Activated CD4-positive, alpha-beta T cell treated with anti-CD3 and anti-CD28 coated beads, Interleukin-2, amount 10 ng/mL, durations not matched to agents 24 days and 14 days (primary cell): ENCODE measurements at regions of chr11 and their contacts with region 1.

Region 1: GRCh38 chr11:36354221-36355003 is 58.3 kb downstream of the PRR5L start:
- DNase-seq: peak; percentile 71
- H3K4me3 Mint-ChIP-seq: peak overlapping the region; percentile 48
- H3K27ac Mint-ChIP-seq: peak overlapping the region; percentile 81
- H3K4me1 Mint-ChIP-seq: peaks cover 66% of the 10 kb centered on the region
- H3K27me3 Mint-ChIP-seq: peaks cover 2% of the 10 kb centered on the region

Region 2: GRCh38 chr11:36289226-36289852 is 65.1 kb before region 1 on chr11 and contains the start of gene COMMD9:
- intact Hi-C with region 1: loop called (anchors 1 kb)
- DNase-seq: peak; percentile 98
- H3K4me3 Mint-ChIP-seq: peak within 1 kb of the TSS; percentile 91
- H3K27ac Mint-ChIP-seq: peak within 1 kb of the TSS; percentile 87
- H3K4me1 Mint-ChIP-seq: peaks cover 26% of the 10 kb centered on the region
- H3K27me3 Mint-ChIP-seq: no peaks in the 10 kb centered on the region
- total RNA-seq, gene COMMD9: 39.0 and 42.3 TPM in 2 replicates

Region 3: GRCh38 chr11:36376888-36377758 is 22.7 kb after region 1 on chr11:
- intact Hi-C with region 1: loop called (anchors 1 kb)
- DNase-seq: peak; percentile 89
- H3K4me3 Mint-ChIP-seq: peak overlapping the region; percentile 98
- H3K27ac Mint-ChIP-seq: peak overlapping the region; percentile 93
- H3K4me1 Mint-ChIP-seq: peaks cover 39% of the 10 kb centered on the region
- H3K27me3 Mint-ChIP-seq: peaks cover 42% of the 10 kb centered on the region

Region 4: DNA sequence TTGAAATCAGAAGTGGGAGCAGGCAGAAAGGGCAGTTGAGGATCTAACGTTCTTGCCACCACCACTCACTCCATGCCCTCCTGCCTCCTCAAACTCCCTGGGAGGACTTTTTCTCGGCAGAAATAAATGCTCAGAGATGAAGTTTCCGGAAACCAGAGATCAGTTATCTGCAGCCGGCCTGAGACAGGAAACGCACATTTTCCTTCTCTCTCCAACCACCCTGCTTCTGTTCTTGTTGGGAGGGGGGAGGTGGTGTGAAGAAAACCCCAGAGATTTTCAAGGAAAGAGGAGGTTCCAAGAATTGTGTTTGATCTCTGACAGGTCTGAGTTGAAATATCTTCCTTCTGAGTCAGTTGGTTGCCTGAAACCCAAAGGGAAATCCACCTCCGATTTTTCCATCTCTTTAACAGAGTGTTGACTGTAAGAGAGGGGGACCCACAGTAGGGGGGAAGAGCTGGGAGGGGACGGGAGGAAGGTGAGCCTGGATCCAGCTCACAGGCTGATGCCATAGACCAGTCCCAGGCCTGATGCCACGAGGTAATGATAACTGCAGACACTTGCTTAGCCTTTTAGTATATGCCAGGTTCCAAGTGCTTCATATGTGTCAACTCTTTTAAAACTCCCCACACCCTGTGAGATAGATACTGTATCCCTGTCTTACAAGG is 54.9 kb after region 1 on chr11:
- intact Hi-C with region 1: loop called (anchors 1 kb)
- DNase-seq: peak; percentile 82
- H3K4me3 Mint-ChIP-seq: peak overlapping the region; percentile 75
- H3K27ac Mint-ChIP-seq: peak overlapping the region; percentile 96
- H3K4me1 Mint-ChIP-seq: peaks cover 67% of the 10 kb centered on the region
- H3K27me3 Mint-ChIP-seq: no peaks in the 10 kb centered on the region

Region 5: DNA sequence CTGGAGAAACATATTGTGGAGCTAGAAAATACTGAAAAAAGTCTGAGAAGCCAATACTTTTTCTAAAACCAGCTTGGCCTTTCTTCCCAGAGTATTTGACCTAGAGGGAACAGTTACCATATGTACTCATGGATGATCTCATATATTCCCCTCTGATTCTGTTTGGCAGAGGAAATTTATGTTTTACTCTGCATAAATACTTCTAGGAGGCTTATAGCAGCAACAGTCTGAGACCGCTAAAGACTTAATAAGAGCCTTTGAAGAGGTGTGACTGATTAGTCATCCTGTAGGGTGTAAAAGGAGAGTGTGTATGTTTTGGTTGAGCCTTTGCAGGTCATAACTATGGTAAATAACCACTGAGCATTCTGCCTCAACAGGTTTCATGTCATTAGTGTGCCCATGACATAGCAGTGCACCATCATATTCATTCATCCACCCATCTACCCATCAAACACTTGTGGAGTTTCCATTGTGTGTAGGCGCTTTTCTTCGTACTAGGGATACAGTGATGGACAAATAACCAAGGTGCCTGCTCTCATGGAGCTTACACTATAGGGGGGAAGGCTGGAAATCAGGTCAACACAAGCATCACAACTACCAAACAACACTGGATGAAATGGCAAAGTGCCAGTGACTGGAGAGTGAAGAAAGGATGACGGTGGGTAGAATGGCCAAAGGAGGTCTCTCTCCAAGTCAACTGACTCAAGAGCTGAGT is 111.2 kb after region 1 on chr11:
- intact Hi-C with region 1: no loop called
- DNase-seq: no peak
- H3K4me3 Mint-ChIP-seq: no peak overlapping the region
- H3K27ac Mint-ChIP-seq: no peak overlapping the region
- H3K4me1 Mint-ChIP-seq: peaks cover 2% of the 10 kb centered on the region
- H3K27me3 Mint-ChIP-seq: no peaks in the 10 kb centered on the region

Region 6: DNA sequence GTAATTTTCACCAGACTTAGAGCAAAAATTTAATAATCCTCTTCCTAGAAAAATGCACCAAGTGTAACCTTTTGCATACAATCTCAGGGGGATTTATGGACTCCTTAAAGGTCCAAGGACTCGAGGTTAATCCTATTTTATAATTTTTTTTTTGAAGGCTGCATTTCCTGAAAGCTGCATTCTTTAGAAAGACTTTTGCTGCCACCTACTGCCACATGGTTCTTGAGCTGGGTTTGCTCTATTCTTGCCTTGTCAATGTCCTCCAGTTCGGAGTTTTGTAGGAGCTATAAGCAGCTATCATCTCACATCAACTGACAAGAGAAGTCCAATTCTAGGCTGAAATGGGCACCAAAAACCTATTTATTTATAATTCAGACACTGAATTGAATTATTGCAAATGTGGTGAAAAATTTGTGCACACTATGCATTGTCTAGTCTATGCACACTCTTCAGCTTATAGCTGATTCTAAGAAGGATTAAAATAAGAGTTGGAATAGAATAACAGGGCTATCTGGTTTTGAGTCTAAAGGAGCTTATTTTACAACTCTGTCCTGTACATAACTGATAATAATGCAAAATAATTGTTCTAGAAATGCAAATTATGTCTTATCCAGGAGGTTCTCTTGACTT is 124.4 kb after region 1 on chr11:
- intact Hi-C with region 1: loop called (anchors 1 kb)
- DNase-seq: peak; percentile 82
- H3K4me3 Mint-ChIP-seq: no peak overlapping the region
- H3K27ac Mint-ChIP-seq: no peak overlapping the region
- H3K4me1 Mint-ChIP-seq: peaks cover 10% of the 10 kb centered on the region
- H3K27me3 Mint-ChIP-seq: no peaks in the 10 kb centered on the region

Region 7: DNA sequence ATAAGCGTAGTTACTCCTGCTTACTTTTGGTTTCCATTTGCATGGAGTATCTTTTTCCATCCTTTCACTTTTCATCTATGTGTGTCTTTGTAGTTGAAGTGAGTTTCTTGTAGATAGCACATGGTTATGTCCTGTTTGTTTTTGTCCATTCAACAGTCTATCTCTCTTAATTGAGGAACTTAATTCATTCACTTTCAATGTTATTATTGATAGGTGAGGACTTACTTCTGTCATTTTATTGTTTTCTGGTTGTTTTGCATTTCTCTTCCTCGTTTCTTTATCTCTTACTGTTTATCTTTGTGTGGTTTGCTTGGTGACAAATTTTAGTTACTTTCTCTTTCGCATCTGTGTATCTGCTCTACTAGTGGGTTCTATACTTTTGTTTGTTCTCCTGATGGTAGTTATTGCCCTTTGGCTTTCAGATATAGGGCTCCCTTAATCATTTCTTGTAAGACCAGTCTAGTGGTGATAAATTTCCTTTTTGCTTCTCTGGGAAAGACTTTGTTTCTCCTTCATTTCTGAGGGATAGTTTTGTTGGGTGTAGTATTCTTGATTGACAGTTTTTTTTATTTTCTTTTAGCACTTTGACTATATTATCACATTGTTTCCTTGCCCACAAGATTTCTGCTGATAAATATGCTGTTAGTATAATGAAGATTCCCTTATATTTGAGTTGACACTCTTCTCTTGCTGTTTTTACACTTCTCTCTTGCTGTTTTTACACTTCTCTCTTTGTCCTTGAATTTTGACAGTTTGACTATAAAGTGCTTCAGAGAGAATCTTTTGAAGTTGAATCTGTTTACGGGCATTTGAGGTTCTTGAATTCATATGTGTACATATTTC is 204.4 kb after region 1 on chr11:
- intact Hi-C with region 1: loop called (anchors 5 kb)
- DNase-seq: no peak
- H3K4me3 Mint-ChIP-seq: peak overlapping the region; percentile 60
- H3K27ac Mint-ChIP-seq: peak overlapping the region; percentile 84
- H3K4me1 Mint-ChIP-seq: peaks cover 22% of the 10 kb centered on the region
- H3K27me3 Mint-ChIP-seq: peaks cover 17% of the 10 kb centered on the region